ENCODE measurements at regions of chr19 and their contacts with region 1.

Region 1: GRCh38 chr19:43595999-43596841 is at the starts of genes IRGQ and ZNF576:
- DNase-seq: peak; percentile 99
- ATAC-seq: peak; percentile 82
- H3K4me3 ChIP-seq: peak within 1 kb of the TSS; percentile 68
- H3K27ac ChIP-seq: peak within 1 kb of the TSS; percentile 79
- H3K4me1 ChIP-seq: peaks cover 9% of the 10 kb centered on the region
- H3K27me3 ChIP-seq: no peaks in the 10 kb centered on the region
- CTCF ChIP-seq: 0 out of 2 replicates have a peak, but pooled peaks have one; percentile 3
- POLR2A ChIP-seq: peak; percentile 78
- RAD21 ChIP-seq: peak; percentile 18; the same call in 1 of the 2 replicates
- total RNA-seq, gene IRGQ: 9.0 and 10.8 TPM in 2 replicates
- total RNA-seq, gene ZNF576: 8.6 and 13.8 TPM in 2 replicates

Region 2: GRCh38 chr19:43446746-43447489 is 149.3 kb before region 1 on chr19:
- CTCF ChIA-PET with region 1: interaction called, 3 read pairs
- POLR2A ChIA-PET with region 1: no interaction called
- dilution Hi-C with region 1: no loop called
- in situ Hi-C with region 1: no loop called
- intact Hi-C with region 1: loop called (anchors 1 kb)
- DNase-seq: peak; percentile 65
- ATAC-seq: peak; percentile 95
- H3K4me3 ChIP-seq: no peak overlapping the region
- H3K27ac ChIP-seq: no peak overlapping the region
- H3K4me1 ChIP-seq: 0 out of 2 replicates have a peak, but pooled peaks cover 2% of the 10 kb centered on the region
- H3K27me3 ChIP-seq: no peaks in the 10 kb centered on the region
- CTCF ChIP-seq: peak; percentile 94
- POLR2A ChIP-seq: no peak
- RAD21 ChIP-seq: peak; percentile 94

Region 3: DNA sequence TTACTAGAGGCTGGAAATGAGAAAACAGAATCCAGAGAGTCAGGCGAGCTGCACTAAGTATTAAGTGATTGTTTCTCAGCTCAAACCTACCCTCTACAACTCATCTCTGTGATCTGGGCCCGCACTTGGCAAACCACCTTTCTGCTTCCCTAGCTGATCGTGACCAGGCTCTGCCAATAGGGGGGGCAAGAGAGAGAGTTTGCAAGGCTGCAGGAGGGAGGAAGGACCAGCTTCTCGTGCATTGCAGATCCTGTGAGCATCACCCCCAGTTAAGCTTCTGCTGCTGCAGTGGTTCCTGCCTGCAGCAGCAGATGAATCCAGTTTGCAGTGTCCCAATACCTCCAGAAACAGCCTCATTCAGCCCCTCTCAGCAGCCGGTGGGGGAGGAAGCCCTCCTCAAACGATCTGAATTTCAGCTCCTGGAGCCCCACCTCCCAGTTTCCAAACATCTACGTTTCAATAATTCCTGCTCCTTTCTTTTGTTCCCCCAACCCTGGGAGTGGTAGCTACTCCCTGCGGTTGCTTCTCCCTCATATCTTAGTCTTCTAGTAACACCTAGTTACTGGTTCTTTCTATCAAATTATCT is 40.9 kb before region 1 on chr19:
- CTCF ChIA-PET with region 1: interaction called, 29 read pairs
- POLR2A ChIA-PET with region 1: no interaction called
- dilution Hi-C with region 1: no loop called
- in situ Hi-C with region 1: no loop called
- intact Hi-C with region 1: loop called (anchors 2 kb)
- DNase-seq: peak; percentile 66
- ATAC-seq: peak; percentile 91
- H3K4me3 ChIP-seq: no peak overlapping the region
- H3K27ac ChIP-seq: no peak overlapping the region
- H3K4me1 ChIP-seq: peaks cover 2% of the 10 kb centered on the region; the same call in 1 of the 2 replicates
- H3K27me3 ChIP-seq: no peaks in the 10 kb centered on the region
- CTCF ChIP-seq: peak; percentile 73
- POLR2A ChIP-seq: no peak
- RAD21 ChIP-seq: peak; percentile 72

Region 4: GRCh38 chr19:43575156-43575950 is 20.9 kb before region 1 on chr19 and contains the starts of genes PINLYP and XRCC1:
- CTCF ChIA-PET with region 1: interaction called, 3 read pairs
- POLR2A ChIA-PET with region 1: no interaction called
- dilution Hi-C with region 1: no loop called
- in situ Hi-C with region 1: no loop called
- intact Hi-C with region 1: loop called (anchors 1 kb)
- DNase-seq: peak; percentile 98
- ATAC-seq: peak; percentile 99
- H3K4me3 ChIP-seq: peak within 1 kb of the TSS; percentile 71
- H3K27ac ChIP-seq: peak within 1 kb of the TSS; percentile 90
- H3K4me1 ChIP-seq: peaks cover 5% of the 10 kb centered on the region
- H3K27me3 ChIP-seq: no peaks in the 10 kb centered on the region
- CTCF ChIP-seq: no peak
- POLR2A ChIP-seq: peak; percentile 58; the same call in 1 of the 2 replicates
- RAD21 ChIP-seq: no peak
- total RNA-seq, gene PINLYP: 0.54 and 0.83 TPM in 2 replicates
- total RNA-seq, gene XRCC1: 12.2 and 12.5 TPM in 2 replicates

Region 5: GRCh38 chr19:43784981-43785808 is 189.0 kb after region 1 on chr19:
- CTCF ChIA-PET with region 1: no interaction called
- POLR2A ChIA-PET with region 1: no interaction called
- dilution Hi-C with region 1: no loop called
- in situ Hi-C with region 1: no loop called
- intact Hi-C with region 1: loop called (anchors 1 kb)
- DNase-seq: peak; percentile 67
- ATAC-seq: peak; percentile 84
- H3K4me3 ChIP-seq: no peak overlapping the region
- H3K27ac ChIP-seq: peak overlapping the region; percentile 5
- H3K4me1 ChIP-seq: peaks cover 12% of the 10 kb centered on the region
- H3K27me3 ChIP-seq: no peaks in the 10 kb centered on the region
- CTCF ChIP-seq: peak; percentile 99
- POLR2A ChIP-seq: peak; percentile 51; the same call in 1 of the 2 replicates
- RAD21 ChIP-seq: peak; percentile 100